AG04449 (cell line): ENCODE measurements at regions of chr10 and their contacts with region 1.

Region 1: DNA sequence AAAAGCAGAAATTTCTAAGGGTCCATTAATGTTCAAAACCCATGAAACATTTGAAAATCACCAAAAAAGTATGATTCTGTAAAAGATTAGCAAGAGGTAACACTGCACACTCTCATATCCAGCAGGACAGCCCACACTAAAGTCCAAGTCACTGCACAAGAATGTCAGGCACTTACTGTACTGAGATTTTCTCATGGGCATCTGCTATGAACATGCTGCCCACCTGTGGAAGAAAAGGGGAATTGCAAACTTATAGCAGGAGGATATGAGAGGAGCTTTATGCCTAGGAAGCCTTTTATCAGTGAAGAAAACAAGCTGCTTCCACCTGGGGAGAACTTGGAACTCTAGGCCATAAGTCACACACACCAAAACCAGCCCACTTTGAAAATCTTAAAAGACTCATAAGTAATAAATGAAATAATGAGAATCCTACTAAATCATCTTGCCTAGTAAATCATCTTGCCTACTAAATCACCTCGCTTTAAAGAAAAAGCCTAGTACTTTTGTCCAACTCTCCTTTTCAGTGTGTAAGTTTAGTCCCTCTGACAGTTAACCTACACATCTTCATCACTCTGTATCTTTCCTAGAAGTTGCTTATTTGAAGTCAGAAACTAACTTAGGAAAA is 46.1 kb downstream of the ARMH3 start:
- DNase-seq: peak; percentile 73
- H3K4me3 ChIP-seq: no peak overlapping the region
- CTCF ChIP-seq: peak; percentile 82

Region 2: GRCh38 chr10:101828766-101829551 is 181.0 kb before region 1 on chr10:
- CTCF ChIA-PET with region 1: interaction called, 581 read pairs
- POLR2A ChIA-PET with region 1: no interaction called
- DNase-seq: no peak
- H3K4me3 ChIP-seq: no peak overlapping the region
- CTCF ChIP-seq: no peak

Region 3: GRCh38 chr10:101889256-101890210 is 120.4 kb before region 1 on chr10:
- CTCF ChIA-PET with region 1: interaction called, 601 read pairs
- POLR2A ChIA-PET with region 1: no interaction called
- DNase-seq: peak; percentile 45
- H3K4me3 ChIP-seq: no peak overlapping the region
- CTCF ChIP-seq: peak; percentile 84

Region 4: GRCh38 chr10:101912561-101913179 is 97.2 kb before region 1 on chr10:
- CTCF ChIA-PET with region 1: interaction called, 11 read pairs
- POLR2A ChIA-PET with region 1: no interaction called
- DNase-seq: no peak
- H3K4me3 ChIP-seq: no peak overlapping the region
- CTCF ChIP-seq: no peak

Region 5: DNA sequence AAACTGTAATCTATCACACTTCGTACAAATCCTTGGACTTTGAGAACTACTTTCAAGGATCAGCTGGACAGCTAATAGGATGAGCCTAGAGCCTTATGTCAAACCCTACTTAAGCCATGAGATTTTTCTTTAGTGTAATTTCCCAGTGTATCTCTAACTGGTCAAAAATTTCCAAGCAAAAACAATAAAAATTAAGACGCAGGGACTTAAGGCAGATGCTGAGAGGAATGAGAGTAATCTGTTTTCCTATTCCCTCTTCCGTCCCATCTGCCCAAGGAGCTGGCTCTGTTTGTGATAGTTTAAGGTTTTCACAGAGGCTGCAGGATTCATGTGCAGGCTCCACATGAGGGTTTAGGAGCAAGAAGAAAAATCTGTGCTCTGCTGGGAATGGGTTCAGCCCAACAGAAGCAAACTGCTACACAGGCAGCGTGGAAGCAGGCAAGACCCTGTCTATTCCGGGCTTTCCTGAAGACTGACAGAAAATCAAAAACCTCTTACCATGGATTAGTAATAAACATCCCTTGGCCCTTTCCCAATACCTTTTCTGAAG is 16.2 kb before region 1 on chr10:
- CTCF ChIA-PET with region 1: interaction called, 70 read pairs
- POLR2A ChIA-PET with region 1: no interaction called
- DNase-seq: no peak
- H3K4me3 ChIP-seq: no peak overlapping the region
- CTCF ChIP-seq: no peak

Region 6: DNA sequence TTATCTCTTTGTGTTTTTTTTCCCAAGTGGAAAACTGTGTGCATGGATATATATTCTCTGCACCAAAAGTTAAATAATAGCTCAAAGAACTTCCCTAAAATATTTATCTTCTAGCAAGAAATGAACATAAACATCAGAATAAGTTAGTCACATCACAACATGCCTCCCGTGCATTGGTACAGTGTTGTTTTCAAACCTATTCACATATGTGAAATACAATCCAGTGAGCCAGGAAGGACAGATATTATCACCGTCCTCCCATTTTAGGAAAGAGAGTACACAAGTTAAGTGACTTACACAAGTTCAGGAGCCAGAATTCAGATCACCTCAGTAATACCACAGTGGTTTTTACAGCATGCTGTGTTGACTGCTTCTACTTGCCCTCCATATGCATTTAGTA is 23.9 kb after region 1 on chr10:
- CTCF ChIA-PET with region 1: interaction called, 11 read pairs
- POLR2A ChIA-PET with region 1: no interaction called
- DNase-seq: no peak
- H3K4me3 ChIP-seq: no peak overlapping the region
- CTCF ChIP-seq: no peak

Region 7: GRCh38 chr10:102090772-102091171 is 80.9 kb after region 1 on chr10:
- CTCF ChIA-PET with region 1: no interaction called
- POLR2A ChIA-PET with region 1: no interaction called
- DNase-seq: no peak
- H3K4me3 ChIP-seq: no peak overlapping the region
- CTCF ChIP-seq: no peak

Region 8: DNA sequence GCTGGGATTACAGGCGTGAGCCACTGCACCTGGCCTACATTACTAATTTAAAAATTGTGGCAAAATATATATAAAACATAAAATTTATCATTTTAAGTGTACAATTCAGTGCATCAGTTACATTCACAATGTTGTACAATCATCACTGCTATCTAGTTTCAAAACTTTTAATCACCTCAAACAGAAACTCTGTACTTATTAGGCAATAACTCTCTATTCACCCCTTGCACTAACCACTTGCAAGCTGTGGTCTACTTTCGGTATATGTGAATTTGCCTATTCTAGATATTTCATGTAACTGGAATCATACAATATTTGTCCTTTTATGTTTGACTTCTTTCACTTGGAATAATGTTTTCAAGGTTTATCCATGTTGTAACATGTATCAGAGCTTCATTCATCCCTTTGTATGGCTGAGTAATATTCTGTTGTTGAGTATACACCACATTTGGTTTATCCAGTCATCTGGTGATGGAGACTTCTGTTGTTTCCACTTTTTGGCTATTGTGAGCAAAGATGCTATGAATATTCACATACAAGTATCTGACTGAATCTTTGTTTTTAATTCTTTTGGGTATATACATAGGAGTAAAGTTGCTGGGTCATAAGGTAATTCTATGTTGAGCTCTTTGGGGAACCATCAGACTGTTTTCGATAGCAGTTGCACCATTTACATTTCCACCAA is 201.8 kb after region 1 on chr10:
- CTCF ChIA-PET with region 1: no interaction called
- POLR2A ChIA-PET with region 1: no interaction called
- DNase-seq: no peak
- H3K4me3 ChIP-seq: no peak overlapping the region
- CTCF ChIP-seq: no peak

Region 9: DNA sequence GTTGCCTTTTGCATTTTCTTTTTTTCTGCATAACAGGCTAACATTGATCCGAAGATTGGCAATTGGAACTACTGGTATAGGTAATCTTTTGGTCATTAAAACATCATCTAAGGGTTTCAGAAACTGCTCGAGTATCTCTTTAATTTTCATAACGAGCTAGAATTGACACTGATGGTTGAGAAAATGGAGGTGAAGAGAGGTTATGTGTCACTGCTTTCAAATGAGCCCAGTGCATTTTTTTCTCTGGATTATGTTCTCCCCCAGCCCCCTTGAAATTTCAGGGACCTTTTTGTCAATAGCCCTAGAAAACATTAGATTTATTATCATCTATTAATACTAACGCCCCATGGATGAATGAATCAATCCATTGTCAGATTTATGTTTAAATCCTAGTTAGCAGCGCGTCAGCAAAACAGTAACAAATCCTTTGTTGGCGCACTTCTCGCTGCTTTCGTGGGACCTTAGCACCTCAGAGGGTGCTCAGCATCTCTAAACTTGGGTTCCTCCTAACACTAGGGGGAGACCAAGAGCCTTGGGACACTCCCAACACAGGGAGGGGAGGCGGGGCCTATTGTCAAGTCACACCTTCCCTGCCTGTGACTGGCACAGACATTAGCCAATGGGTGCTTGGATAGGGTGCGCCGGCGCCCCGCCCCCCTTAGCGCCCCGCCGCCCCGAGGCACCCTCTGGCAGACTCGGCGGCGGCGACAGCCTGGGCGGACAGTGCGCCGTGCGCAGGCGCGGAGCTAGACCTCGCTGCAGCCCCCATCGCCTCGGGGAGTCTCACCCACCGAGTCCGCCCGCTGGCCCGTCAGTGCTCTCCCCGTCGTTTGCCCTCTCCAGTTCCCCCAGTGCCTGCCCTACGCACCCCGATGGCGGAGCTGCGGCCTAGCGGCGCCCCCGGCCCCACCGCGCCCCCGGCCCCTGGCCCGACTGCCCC is 493.6 kb after region 1 on chr10 and contains the start of gene SUFU:
- CTCF ChIA-PET with region 1: no interaction called
- POLR2A ChIA-PET with region 1: no interaction called
- DNase-seq: peak; percentile 90
- H3K4me3 ChIP-seq: peak within 1 kb of the TSS; percentile 96
- CTCF ChIP-seq: peak; percentile 86